ENCODE measurements at regions of chr6 and their contacts with region 1.

Region 1: DNA sequence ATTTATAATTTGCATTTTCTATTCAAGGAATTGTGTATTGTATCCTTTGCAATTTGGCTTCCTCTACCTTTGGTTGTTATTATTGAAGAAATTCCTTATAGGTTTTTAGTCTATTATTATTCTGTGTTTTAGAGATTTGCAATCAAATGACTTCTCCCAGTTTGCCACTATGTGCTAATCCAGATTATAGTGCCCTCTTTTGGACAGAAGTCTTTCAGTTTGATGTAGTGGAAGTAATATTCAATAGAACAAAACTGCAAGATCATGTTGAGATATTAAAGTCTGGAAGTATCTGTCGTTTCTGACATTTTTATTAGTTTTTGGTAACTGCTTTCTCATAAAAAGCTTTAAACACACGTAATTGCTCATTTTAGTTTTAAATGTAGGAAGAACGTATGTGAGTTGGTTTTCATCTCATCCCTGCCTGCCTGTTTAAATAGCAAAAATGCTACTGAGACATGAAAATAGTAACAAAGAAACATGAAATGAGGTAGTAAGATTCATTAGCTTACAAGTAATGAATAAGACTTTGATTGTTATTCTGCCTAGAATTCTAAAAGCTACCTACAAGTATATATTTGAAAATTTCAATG is 72.8 kb downstream of the RTN4IP1 start:
- DNase-seq: no peak
- ATAC-seq: no peak
- H3K4me3 ChIP-seq: no peak overlapping the region
- H3K27ac ChIP-seq: no peak overlapping the region
- H3K4me1 ChIP-seq: no peaks in the 10 kb centered on the region
- H3K27me3 ChIP-seq: no peaks in the 10 kb centered on the region
- CTCF ChIP-seq: peak; percentile 58; the same call in 1 of the 2 replicates

Region 2: GRCh38 chr6:106444777-106445507 is 111.5 kb before region 1 on chr6:
- CTCF ChIA-PET with region 1: no interaction called
- POLR2A ChIA-PET with region 1: no interaction called
- in situ Hi-C with region 1: no loop called
- intact Hi-C with region 1: loop called (anchors 2 kb)
- DNase-seq: peak; percentile 57
- ATAC-seq: peak; percentile 89
- H3K4me3 ChIP-seq: no peak overlapping the region
- H3K27ac ChIP-seq: no peak overlapping the region
- H3K4me1 ChIP-seq: no peaks in the 10 kb centered on the region
- H3K27me3 ChIP-seq: peaks cover 28% of the 10 kb centered on the region; the same call in 1 of the 2 replicates
- CTCF ChIP-seq: peak; percentile 85

Region 3: GRCh38 chr6:106591111-106591825 is 34.8 kb after region 1 on chr6:
- CTCF ChIA-PET with region 1: no interaction called
- POLR2A ChIA-PET with region 1: no interaction called
- in situ Hi-C with region 1: no loop called
- intact Hi-C with region 1: no loop called
- DNase-seq: no peak
- ATAC-seq: peak; percentile 80
- H3K4me3 ChIP-seq: no peak overlapping the region
- H3K27ac ChIP-seq: no peak overlapping the region
- H3K4me1 ChIP-seq: no peaks in the 10 kb centered on the region
- H3K27me3 ChIP-seq: no peaks in the 10 kb centered on the region
- CTCF ChIP-seq: no peak

Region 4: GRCh38 chr6:107369493-107369892 is 813.0 kb after region 1 on chr6:
- CTCF ChIA-PET with region 1: no interaction called
- POLR2A ChIA-PET with region 1: no interaction called
- in situ Hi-C with region 1: no loop called
- intact Hi-C with region 1: no loop called
- DNase-seq: no peak
- ATAC-seq: no peak
- H3K4me3 ChIP-seq: no peak overlapping the region
- H3K27ac ChIP-seq: no peak overlapping the region
- H3K4me1 ChIP-seq: no peaks in the 10 kb centered on the region
- H3K27me3 ChIP-seq: no peaks in the 10 kb centered on the region
- CTCF ChIP-seq: no peak